ENCODE measurements at regions of chr4 and their contacts with region 1.

Region 1: GRCh38 chr4:159366966-159367780 is 264.3 kb downstream of the RAPGEF2 start:
- DNase-seq: peak in 1 of 2 donors; percentile 30
- ATAC-seq: peak in 7 of 8 donors; percentile 33 to 77 (median 65)
- H3K4me3 ChIP-seq: peak overlapping the region in 5 of 10 donors; percentile 17 to 29 (median 22)
- H3K27ac ChIP-seq: peak overlapping the region in 8 of 10 donors; percentile 32 to 81 (median 50)
- H3K4me1 ChIP-seq: peaks cover 0 to 33% (median 6%) of the 10 kb centered on the region in 9 donors
- H3K27me3 ChIP-seq: no peaks in the 10 kb centered on the region
- CTCF ChIP-seq: no peak

Region 2: GRCh38 chr4:158610790-158611189 is 756.4 kb before region 1 on chr4:
- intact Hi-C with region 1: no loop called
- DNase-seq: no peak
- ATAC-seq: no peak
- H3K4me3 ChIP-seq: no peak overlapping the region
- H3K27ac ChIP-seq: peak overlapping the region in 1 of 10 donors; percentile 18
- H3K4me1 ChIP-seq: peaks cover 0 to 14% (median 0%) of the 10 kb centered on the region in 9 donors
- H3K27me3 ChIP-seq: no peaks in the 10 kb centered on the region
- CTCF ChIP-seq: no peak

Region 3: GRCh38 chr4:159266981-159267868 is 99.9 kb before region 1 on chr4:
- intact Hi-C with region 1: no loop called
- DNase-seq: no peak
- ATAC-seq: peak; percentile 29 to 64 (median 52)
- H3K4me3 ChIP-seq: peak overlapping the region in 9 of 10 donors; percentile 6 to 42 (median 37)
- H3K27ac ChIP-seq: peak overlapping the region; percentile 17 to 73 (median 56)
- H3K4me1 ChIP-seq: peaks cover 5 to 91% (median 72%) of the 10 kb centered on the region in 9 donors
- H3K27me3 ChIP-seq: no peaks in the 10 kb centered on the region
- CTCF ChIP-seq: no peak

Region 4: GRCh38 chr4:159428975-159429692 is 62.0 kb after region 1 on chr4:
- intact Hi-C with region 1: loop called in 3 of 10 experiments (anchors 5 to 10 kb)
- DNase-seq: no peak
- ATAC-seq: peak; percentile 29 to 87 (median 77)
- H3K4me3 ChIP-seq: peak overlapping the region in 2 of 10 donors; percentile 13 to 24
- H3K27ac ChIP-seq: peak overlapping the region in 4 of 10 donors; percentile 17 to 59 (median 44)
- H3K4me1 ChIP-seq: peaks cover 4 to 24% (median 13%) of the 10 kb centered on the region in 9 donors
- H3K27me3 ChIP-seq: no peaks in the 10 kb centered on the region
- CTCF ChIP-seq: no peak

Region 5: GRCh38 chr4:159526172-159526571 is 159.0 kb after region 1 on chr4:
- intact Hi-C with region 1: no loop called
- DNase-seq: no peak
- ATAC-seq: no peak
- H3K4me3 ChIP-seq: no peak overlapping the region
- H3K27ac ChIP-seq: no peak overlapping the region
- H3K4me1 ChIP-seq: no peaks in the 10 kb centered on the region
- H3K27me3 ChIP-seq: no peaks in the 10 kb centered on the region
- CTCF ChIP-seq: no peak